ENCODE measurements at regions of chr2 and their contacts with region 1.

Region 1: GRCh38 chr2:69914170-69914960 is 544 bp upstream of the MXD1 start:
- DNase-seq: peak; percentile 100
- H3K4me3 Mint-ChIP-seq: peak overlapping the region; percentile 86
- H3K27ac Mint-ChIP-seq: peak overlapping the region; percentile 93
- H3K4me1 Mint-ChIP-seq: peaks cover 29% of the 10 kb centered on the region
- H3K27me3 Mint-ChIP-seq: no peaks in the 10 kb centered on the region

Region 2: GRCh38 chr2:69741619-69742466 is 172.5 kb before region 1 on chr2 and contains the start of gene ANXA4:
- intact Hi-C with region 1: no loop called
- DNase-seq: peak; percentile 92
- H3K4me3 Mint-ChIP-seq: peak within 1 kb of the TSS; percentile 91
- H3K27ac Mint-ChIP-seq: peak within 1 kb of the TSS; percentile 92
- H3K4me1 Mint-ChIP-seq: peaks cover 29% of the 10 kb centered on the region
- H3K27me3 Mint-ChIP-seq: peaks cover 12% of the 10 kb centered on the region
- total RNA-seq, gene ANXA4: 47.4 and 49.0 TPM in 2 replicates

Region 3: GRCh38 chr2:69933839-69934613 is 19.7 kb after region 1 on chr2:
- intact Hi-C with region 1: loop called (anchors 2 kb)
- DNase-seq: no peak
- H3K4me3 Mint-ChIP-seq: no peak overlapping the region
- H3K27ac Mint-ChIP-seq: peak overlapping the region; percentile 0
- H3K4me1 Mint-ChIP-seq: peaks cover 28% of the 10 kb centered on the region
- H3K27me3 Mint-ChIP-seq: no peaks in the 10 kb centered on the region

Region 4: DNA sequence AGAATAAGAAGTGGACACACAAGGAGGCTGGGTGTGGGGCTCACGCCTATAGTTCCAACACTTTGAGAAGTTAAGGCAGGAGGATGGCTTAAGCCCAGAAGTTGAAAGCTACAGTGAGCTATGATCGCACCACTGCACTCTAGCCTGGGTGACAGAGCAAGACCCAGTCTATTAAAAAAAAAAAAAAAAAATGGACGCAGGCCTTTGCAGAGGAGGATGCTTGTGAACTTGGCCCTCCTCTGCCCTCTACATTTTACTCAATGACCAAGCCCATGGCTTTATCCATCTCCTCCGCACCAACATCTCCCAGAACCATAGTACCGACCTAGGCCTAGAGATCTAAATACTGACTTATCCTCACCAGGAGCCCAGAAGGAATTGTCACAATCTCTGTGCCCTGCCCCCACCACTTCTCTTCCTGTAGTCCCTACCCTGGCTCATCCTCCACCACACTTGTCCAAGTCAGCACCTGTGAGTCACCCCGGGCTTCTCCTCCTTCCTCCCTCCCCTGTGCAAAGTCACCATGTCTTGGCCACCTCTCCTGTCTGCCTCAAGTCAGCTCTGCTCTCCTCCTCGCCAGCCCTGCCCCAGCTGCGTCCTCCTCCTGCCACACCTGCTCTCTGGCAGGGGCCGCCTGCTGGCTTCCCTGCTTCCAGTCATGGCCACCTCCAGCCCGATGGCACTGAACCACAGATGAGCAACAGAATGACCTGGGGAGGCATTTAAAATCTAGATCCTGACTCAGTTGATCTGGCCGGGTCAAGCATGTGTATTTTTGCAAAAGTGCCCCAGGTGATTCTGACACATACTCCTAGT is 82.9 kb after region 1 on chr2:
- intact Hi-C with region 1: loop called (anchors 5 kb)
- DNase-seq: no peak
- H3K4me3 Mint-ChIP-seq: no peak overlapping the region
- H3K27ac Mint-ChIP-seq: peak overlapping the region; percentile 4
- H3K4me1 Mint-ChIP-seq: peaks cover 21% of the 10 kb centered on the region
- H3K27me3 Mint-ChIP-seq: no peaks in the 10 kb centered on the region

Region 5: DNA sequence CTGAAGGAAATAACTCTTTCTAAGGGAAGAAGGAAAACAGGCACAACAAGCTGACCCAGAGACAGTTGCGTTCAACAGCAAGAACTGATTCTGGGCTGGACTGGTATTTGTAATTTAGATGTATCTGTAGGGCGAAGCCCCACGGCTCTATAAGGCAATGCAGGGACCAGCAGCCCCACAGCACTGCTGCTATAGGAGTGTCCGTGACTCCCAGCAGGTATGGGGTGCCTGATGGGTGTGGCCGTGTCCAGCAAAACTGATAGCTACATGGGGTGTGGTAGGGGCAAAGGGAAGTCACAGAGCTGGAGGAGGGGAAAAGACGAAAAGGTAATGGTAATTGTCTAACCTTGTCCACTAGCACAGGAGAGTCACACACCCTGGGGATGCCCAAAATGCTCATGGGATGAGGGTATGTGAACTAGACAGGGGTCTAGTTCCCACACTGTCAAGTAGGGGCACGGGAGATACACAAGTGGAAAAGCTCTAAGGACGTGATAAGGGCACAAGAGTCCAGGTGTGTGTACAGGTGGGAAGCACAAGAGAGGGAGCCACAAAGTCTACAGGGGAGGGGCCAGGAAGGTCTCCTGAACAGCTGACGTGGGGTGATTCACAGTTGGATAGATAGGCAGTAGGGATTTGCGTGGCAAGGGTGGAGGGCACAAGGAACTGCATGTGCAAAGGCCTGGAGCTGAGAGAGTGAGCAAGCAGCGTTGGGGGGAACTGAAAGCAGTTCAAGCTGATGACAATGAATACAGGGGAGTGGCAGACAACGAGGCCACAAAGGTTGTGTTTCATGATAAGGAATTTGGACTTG is 95.6 kb after region 1 on chr2:
- intact Hi-C with region 1: no loop called
- DNase-seq: no peak
- H3K4me3 Mint-ChIP-seq: no peak overlapping the region
- H3K27ac Mint-ChIP-seq: peak overlapping the region; percentile 28
- H3K4me1 Mint-ChIP-seq: peaks cover 17% of the 10 kb centered on the region
- H3K27me3 Mint-ChIP-seq: no peaks in the 10 kb centered on the region

Region 6: GRCh38 chr2:70029814-70030409 is 115.5 kb after region 1 on chr2:
- intact Hi-C with region 1: no loop called
- DNase-seq: no peak
- H3K4me3 Mint-ChIP-seq: no peak overlapping the region
- H3K27ac Mint-ChIP-seq: no peak overlapping the region
- H3K4me1 Mint-ChIP-seq: peaks cover 7% of the 10 kb centered on the region
- H3K27me3 Mint-ChIP-seq: no peaks in the 10 kb centered on the region

Region 7: DNA sequence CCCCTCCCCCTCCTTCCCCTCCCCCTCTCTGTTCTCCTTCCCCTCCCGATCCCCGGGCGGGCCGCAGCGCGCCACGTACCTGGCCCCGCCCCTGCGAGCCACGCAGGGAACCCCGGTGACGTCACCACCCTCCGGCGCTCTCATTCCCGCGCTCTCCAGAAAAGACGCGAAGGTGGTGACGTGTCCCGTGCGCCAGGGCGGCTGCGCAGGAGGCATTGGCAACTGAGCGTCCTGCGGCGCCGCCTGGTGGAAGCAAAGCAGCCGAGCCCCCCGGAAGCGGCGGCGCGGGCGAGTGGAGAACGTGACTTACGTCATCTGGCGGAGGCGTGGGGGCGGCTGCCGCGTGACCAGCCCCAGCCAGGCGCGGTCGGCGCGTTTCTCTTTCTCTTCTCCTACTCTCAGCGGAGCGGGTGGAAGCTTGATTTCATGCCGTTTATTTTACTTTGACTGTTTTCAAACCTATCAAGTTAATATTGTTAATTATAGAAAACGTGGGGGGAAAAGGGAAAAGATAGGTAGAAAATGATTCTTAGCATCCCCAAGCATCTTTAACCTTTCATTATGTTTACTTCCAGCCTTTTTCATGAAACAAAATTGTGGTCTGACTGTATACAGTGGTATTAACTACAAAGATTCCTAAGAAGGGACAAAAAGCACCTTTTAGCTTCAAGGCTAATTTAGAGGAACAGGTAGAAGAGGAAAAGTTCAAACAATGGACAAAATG is 228.4 kb after region 1 on chr2:
- intact Hi-C with region 1: loop called (anchors 1 kb)
- DNase-seq: peak; percentile 100
- H3K4me3 Mint-ChIP-seq: peak overlapping the region; percentile 87
- H3K27ac Mint-ChIP-seq: peak overlapping the region; percentile 98
- H3K4me1 Mint-ChIP-seq: peaks cover 59% of the 10 kb centered on the region
- H3K27me3 Mint-ChIP-seq: no peaks in the 10 kb centered on the region

Region 8: DNA sequence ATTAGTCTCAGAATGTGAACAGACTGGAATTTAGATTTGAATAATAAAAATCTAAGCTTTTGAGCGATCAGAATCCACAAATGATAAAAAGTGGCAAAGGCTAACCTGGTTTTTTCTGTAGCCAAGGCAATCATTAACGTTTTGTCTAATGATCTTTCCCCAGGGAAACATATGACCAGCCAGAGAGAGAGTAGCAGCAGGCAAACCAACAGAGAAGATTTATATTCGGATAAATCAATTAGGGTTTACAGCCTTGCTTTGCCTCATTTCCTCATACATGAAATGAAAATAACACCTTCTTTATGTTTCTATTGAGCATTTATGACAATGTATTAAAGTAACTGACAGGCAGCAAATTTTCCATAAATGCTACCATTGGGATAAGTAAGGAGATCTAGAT is 319.6 kb after region 1 on chr2:
- intact Hi-C with region 1: no loop called
- DNase-seq: peak; percentile 25
- H3K4me3 Mint-ChIP-seq: no peak overlapping the region
- H3K27ac Mint-ChIP-seq: no peak overlapping the region
- H3K4me1 Mint-ChIP-seq: peaks cover 2% of the 10 kb centered on the region
- H3K27me3 Mint-ChIP-seq: no peaks in the 10 kb centered on the region

Region 9: DNA sequence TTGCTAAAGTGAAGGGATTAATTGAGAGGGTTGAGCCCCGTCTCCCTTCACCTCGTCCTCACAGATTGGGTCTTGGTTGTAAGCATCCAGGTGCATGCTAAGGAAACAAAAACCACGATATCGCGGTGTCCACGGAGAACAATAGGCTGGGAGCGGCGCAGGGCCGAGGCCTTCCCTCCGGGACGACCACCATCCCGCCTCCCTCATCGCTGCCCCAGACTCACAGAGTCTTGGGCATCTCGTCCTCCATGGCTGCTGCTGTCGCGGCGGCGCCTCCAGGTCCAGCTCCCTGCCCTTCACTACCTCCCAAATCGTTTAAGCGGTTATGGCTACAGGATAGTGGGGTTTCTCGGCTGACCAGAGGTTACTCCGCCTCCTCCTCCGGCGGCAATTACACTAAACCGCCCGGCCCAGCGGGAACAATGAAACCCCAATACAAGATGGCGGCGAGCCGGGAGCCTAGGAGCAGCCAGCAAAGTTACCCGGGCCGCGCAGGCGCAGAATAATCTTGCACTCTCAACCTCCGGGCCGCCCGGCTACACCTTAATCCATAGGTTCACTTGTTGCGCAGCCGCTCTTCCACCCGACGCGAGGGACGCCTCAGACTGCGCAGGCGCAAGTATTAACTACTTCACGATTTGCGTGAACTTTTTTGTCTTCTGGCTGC is 333.9 kb after region 1 on chr2 and contains the start of gene TIA1:
- intact Hi-C with region 1: loop called (anchors 2 kb)
- DNase-seq: peak; percentile 99
- H3K4me3 Mint-ChIP-seq: peak within 1 kb of the TSS; percentile 96
- H3K27ac Mint-ChIP-seq: peak within 1 kb of the TSS; percentile 99
- H3K4me1 Mint-ChIP-seq: peaks cover 26% of the 10 kb centered on the region
- H3K27me3 Mint-ChIP-seq: peaks cover 3% of the 10 kb centered on the region
- total RNA-seq, gene TIA1: 104 and 105 TPM in 2 replicates